ENCODE measurements at regions of chr11 and their contacts with region 1.

Region 1: DNA sequence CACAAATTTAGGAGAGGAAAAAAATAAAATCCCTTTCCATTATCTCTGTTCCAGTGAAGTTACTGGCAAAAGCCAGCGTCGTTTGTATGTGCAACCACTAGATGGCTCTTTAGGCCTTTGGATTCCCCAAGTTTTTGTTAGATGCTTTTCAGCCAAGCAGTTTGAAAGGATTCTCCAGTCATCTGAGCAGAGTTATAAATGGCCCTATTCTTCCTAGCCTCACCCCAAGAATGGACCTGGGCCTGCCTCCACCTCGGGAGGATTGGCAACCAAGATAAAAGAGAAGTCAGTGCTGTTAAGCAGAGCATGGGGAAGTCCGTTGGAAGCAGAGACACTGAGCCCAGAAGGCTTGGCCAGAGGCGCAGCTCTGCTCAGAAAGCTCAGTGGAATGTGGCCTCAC is 15.4 kb downstream of the FAM181B start:
- DNase-seq: no peak
- ATAC-seq: peak; percentile 62 to 67
- H3K4me3 ChIP-seq: no peak overlapping the region
- H3K27ac ChIP-seq: no peak overlapping the region
- H3K4me1 ChIP-seq: no peaks in the 10 kb centered on the region
- H3K27me3 ChIP-seq: no peaks in the 10 kb centered on the region

Region 2: DNA sequence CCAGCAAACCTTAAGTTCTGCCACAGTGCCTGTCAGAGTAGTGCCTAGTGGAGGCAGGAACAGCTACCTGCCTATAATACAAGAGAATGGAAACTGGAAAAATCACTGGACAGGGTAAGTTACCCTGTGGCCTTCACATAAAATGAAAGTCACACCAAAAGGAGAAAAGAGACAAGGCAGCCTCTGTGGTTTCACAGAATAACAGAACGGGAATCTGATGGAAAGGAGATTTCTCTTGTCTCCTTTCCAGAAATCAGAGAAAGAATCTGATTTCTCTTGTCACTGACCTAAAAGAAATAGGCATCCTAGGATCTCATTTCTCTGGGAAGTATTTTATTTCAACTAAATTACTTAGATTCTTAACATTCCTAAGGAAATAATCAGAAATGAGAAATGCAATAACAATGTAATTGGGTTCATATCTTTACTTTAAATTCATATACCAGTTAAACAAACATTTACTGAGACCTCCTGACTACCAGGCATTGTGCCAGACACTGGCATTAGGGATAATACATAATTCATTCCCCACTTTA is 140.3 kb after region 1 on chr11:
- intact Hi-C with region 1: loop called in 3 of 4 experiments (anchors 5 to 10 kb)
- DNase-seq: no peak
- ATAC-seq: peak in 1 of 2 donors; percentile 18
- H3K4me3 ChIP-seq: no peak overlapping the region
- H3K27ac ChIP-seq: no peak overlapping the region
- H3K4me1 ChIP-seq: no peaks in the 10 kb centered on the region
- H3K27me3 ChIP-seq: no peaks in the 10 kb centered on the region

Region 3: DNA sequence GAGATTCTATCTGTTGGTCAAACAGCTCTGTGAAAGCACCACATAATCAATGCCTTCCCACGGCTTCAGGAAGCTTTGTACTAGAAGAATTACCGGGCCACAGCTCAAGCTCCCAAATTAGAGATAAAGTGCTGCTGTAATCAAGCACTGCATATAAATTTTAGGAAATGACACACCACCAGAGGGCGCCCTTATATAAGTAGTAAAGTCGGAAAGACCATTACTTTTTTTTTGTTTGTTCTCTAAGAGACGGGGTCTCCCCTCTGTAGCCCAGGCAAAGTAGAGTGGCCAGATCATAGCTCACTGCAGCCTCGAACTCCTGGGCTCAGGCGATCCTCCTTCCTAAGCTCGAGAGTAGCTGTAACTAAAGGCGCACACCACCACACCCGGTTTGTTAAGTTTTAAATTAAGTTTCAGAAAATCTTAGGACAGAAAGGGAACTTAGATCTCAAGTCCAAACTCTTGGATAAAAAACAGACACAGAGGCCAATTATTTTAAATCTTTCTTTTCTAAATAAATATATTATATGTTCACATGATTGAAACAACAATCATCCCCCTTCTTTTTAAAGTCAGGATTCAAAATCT is 149.3 kb after region 1 on chr11:
- intact Hi-C with region 1: loop called in 2 of 4 experiments (anchors 5 to 10 kb)
- DNase-seq: peak; percentile 52 to 86 (median 69)
- ATAC-seq: peak; percentile 44 to 65
- H3K4me3 ChIP-seq: peak overlapping the region; percentile 43
- H3K27ac ChIP-seq: no peak overlapping the region
- H3K4me1 ChIP-seq: peaks cover 6% of the 10 kb centered on the region
- H3K27me3 ChIP-seq: no peaks in the 10 kb centered on the region

Region 4: GRCh38 chr11:83249972-83250593 is 531.8 kb after region 1 on chr11:
- intact Hi-C with region 1: loop called in 1 of 4 experiments (anchors 10 kb)
- DNase-seq: no peak
- ATAC-seq: peak in 1 of 2 donors; percentile 43
- H3K4me3 ChIP-seq: no peak overlapping the region
- H3K27ac ChIP-seq: no peak overlapping the region
- H3K4me1 ChIP-seq: no peaks in the 10 kb centered on the region
- H3K27me3 ChIP-seq: no peaks in the 10 kb centered on the region

Measured in right cardiac atrium (tissue), 5 donors.